ENCODE measurements at regions of chr11 and their contacts with region 1.

Region 1: DNA sequence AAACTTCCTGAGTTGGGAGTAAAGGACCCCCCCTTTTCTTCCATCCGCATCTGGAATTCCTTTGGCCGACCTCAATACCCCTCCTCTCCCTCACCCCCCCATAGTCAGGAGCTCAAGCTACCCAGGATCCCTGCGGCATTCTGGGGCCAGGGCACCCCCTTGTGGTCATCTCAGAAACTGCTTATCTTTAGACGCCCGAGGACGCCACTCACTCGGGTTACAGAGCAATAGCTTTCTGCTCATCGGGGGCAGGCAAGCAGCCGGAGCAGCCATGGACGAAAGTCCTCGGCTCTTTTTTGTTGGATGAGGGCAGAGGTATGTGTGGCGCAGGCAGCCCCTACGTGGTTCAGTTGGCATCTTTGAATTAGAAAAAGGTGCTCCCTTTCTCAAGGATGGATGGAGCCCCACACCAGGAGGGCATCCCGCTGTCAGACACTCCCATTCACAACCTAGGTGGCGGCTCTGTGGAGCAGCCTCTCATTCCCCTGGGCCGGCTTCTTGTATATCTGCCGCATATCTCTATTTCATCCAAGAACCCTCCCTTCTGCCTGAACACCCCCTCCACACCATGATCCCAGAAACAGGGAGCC is 2.3 kb downstream of the C1QTNF5 start:
- DNase-seq: peak; percentile 74 to 89 (median 82)
- ATAC-seq: peak; percentile 73
- H3K4me3 ChIP-seq: no peak overlapping the region
- H3K27ac ChIP-seq: 0 out of 3 replicates have a peak overlapping the region, but pooled peaks have one; percentile 23
- H3K4me1 ChIP-seq: peaks cover 23 to 69% of the 10 kb centered on the region in 2 experiments; a peak in 4 of 5 replicates
- H3K27me3 ChIP-seq: peaks cover 0 to 14% of the 10 kb centered on the region in 2 experiments; a peak in 3 of 5 replicates
- CTCF ChIP-seq: peak; percentile 85 to 93 (median 90)
- EP300 ChIP-seq: no peak
- POLR2A ChIP-seq: no peak
- RAD21 ChIP-seq: peak; percentile 65 to 69

Region 2: DNA sequence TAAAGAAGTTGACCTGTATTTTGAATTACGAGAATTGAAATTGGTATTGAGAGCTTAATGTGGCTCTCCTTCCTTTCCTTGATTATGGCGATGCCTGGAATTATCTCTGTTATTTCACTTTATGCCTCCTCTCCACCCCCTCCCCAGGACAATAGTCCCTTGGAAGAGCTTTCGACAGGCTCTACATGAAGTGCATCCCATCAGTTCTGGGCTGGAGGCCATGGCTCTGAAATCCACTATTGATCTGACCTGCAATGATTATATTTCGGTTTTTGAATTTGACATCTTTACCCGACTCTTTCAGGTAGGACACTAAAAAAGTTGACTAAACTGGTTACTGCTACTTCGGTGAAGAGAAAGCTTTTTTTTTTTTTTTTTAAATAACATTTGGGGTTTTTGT is 64.7 kb before region 1 on chr11:
- CTCF ChIA-PET with region 1: no interaction called
- POLR2A ChIA-PET with region 1: no interaction called
- in situ Hi-C with region 1: no loop called
- intact Hi-C with region 1: no loop called
- DNase-seq: no peak
- ATAC-seq: no peak
- H3K4me3 ChIP-seq: no peak overlapping the region
- H3K27ac ChIP-seq: no peak overlapping the region
- H3K4me1 ChIP-seq: no peaks in the 10 kb centered on the region; a peak in 1 of 5 replicates
- H3K27me3 ChIP-seq: no peaks in the 10 kb centered on the region
- CTCF ChIP-seq: no peak
- EP300 ChIP-seq: no peak
- POLR2A ChIP-seq: no peak
- RAD21 ChIP-seq: no peak

Region 3: GRCh38 chr11:119373921-119374631 is 35.7 kb after region 1 on chr11:
- CTCF ChIA-PET with region 1: no interaction called
- POLR2A ChIA-PET with region 1: interaction called, 4 read pairs
- in situ Hi-C with region 1: no loop called
- intact Hi-C with region 1: loop called (anchors 5 kb)
- DNase-seq: peak; percentile 58 to 77 (median 65)
- ATAC-seq: peak; percentile 54
- H3K4me3 ChIP-seq: no peak overlapping the region
- H3K27ac ChIP-seq: no peak overlapping the region; the same call in 2 of the 3 replicates
- H3K4me1 ChIP-seq: peaks cover 66 to 77% of the 10 kb centered on the region in 2 experiments
- H3K27me3 ChIP-seq: no peaks in the 10 kb centered on the region
- CTCF ChIP-seq: peak; percentile 88 to 94 (median 92)
- EP300 ChIP-seq: peak; percentile 12; the same call in 1 of the 2 replicates
- POLR2A ChIP-seq: no peak
- RAD21 ChIP-seq: peak; percentile 72 to 93

Region 4: DNA sequence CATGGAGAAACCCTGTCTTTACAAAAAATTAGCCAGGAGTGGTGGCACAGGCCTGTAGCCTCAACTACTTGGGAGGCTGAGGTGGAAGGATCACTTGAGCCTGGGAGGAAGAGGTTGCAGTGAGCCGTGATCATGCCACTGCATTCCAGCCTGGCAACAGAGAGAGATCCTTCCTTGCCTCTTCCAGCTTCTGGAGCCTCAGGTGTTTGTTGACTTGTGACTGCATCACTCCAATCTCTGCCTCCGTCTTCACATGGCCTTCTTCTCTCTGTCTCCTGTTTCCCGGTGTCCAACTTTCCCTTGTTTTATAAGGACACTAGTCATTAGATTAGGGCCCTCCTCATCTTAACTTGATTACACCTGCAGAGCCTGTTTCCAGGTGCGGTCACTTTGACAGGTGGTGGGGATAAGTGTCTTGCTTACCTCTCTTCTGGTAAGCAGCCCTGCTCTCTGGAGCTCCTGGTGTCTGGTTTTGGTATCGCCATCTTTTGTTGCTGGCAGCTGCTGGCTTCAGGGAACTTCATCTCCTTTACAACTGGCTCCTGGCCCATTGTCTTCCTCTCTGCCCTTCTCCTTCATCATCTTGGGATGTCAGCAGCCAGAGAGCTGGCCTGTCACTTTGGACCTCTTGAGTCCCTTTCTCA is 51.3 kb after region 1 on chr11:
- CTCF ChIA-PET with region 1: no interaction called
- POLR2A ChIA-PET with region 1: no interaction called
- in situ Hi-C with region 1: no loop called
- intact Hi-C with region 1: no loop called
- DNase-seq: peak in 3 of 4 experiments; percentile 28 to 40 (median 32)
- ATAC-seq: peak; percentile 88
- H3K4me3 ChIP-seq: no peak overlapping the region
- H3K27ac ChIP-seq: no peak overlapping the region
- H3K4me1 ChIP-seq: no peaks in the 10 kb centered on the region
- H3K27me3 ChIP-seq: no peaks in the 10 kb centered on the region
- CTCF ChIP-seq: peak; percentile 54 to 62 (median 54); a peak in 5 of 6 replicates
- EP300 ChIP-seq: no peak
- POLR2A ChIP-seq: no peak
- RAD21 ChIP-seq: no peak